ENCODE measurements at regions of chr1 and their contacts with region 1.

Region 1: GRCh38 chr1:112619520-112620376 is at the start of gene CAPZA1:
- DNase-seq: peak; percentile 90
- H3K4me3 ChIP-seq: peak within 1 kb of the TSS; percentile 85 to 91
- H3K27ac ChIP-seq: peak within 1 kb of the TSS; percentile 95 to 98
- H3K4me1 ChIP-seq: peaks cover 6% of the 10 kb centered on the region
- H3K27me3 ChIP-seq: no peaks in the 10 kb centered on the region
- CTCF ChIP-seq: peak in 1 of 4 experiments; percentile 4
- POLR2A ChIP-seq: peak; percentile 77
- total RNA-seq, gene CAPZA1: 87.4 to 104 TPM

Region 2: DNA sequence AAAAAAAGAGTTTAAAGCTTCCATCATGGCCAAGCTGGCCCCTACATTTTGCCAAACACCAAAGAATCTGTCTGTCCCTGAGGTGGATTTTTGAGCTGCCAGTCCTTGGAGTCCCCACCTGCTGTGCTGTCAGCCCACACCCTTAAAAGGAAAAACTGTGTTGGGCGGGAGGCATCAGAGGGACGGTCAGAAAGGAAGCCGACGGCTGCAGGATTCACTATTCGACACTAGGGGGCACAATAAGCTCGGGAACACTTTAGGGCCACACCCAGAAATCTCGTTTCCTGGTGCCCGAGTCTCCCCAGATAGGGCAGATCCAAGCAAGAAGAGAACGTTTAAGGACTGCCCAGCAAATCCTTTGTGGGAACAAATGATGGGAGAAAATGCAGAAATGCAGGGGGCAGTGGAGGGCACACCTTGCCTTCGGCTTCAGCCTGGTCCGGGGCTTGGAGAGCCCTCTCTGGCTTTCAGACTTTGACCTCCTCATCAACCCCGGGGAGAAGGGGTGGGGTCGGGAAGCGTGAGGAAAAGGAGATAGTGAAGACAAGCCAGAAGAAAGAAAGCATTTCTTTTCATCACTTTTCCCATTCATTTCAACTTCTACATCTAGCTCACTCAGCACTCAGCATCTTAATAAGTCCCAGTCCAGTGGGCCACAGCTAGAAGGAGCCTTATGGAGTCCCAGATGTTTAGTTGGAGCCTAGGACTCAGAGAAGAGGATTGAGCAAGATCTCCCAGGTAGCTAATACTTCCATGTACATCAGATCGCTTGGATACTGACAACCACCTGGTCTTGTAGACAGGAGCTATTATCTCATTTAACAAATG is 228.8 kb before region 1 on chr1:
- intact Hi-C with region 1: loop called (anchors 2 kb)
- DNase-seq: peak; percentile 89
- H3K4me3 ChIP-seq: peak overlapping the region; percentile 14 to 18
- H3K27ac ChIP-seq: peak overlapping the region; percentile 26 to 52
- H3K4me1 ChIP-seq: peaks cover 8% of the 10 kb centered on the region
- H3K27me3 ChIP-seq: no peaks in the 10 kb centered on the region
- CTCF ChIP-seq: peak; percentile 86 to 97 (median 96)
- POLR2A ChIP-seq: no peak

Region 3: DNA sequence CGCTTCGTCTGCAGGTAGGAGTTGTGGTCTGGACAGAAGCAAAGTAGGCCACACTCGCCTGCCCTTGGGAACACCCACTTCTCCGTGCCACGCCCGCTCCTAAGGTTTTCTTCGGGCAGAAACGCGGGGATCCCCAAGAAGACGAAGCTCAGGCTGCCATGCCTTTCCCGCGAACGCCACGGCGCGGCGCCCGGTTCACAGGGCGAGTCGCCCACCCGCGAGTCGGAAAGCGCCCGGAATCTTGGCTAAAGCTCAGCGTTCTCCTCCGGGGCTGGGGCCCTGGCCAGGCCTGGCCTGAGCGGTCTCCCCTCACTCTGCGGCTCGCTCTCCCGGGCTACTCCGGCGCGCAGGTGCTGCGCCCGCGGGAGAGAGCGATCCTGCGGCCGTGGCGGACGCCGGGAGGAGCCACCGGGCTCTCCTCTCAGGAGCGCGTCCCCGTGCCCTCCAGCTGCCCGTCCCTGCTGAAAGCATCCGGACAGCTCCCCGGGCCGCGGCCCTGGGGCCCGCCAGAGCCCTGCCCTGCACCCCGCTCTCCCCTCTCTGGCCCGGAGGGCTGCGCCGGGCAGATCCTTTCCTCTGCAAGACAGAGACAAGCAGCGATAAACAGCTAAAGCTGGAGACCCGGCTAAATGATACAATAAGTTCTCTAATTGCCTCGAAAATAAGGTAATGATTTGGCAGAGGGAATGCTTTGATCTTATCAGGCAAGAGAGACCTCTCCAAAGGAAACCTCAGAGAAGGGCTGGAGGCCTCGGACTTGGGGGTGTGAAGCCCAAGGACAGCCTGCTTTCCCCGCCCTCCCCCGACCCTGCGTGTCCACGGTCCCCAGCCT is 117.7 kb before region 1 on chr1:
- intact Hi-C with region 1: loop called (anchors 5 kb)
- DNase-seq: peak; percentile 70
- H3K4me3 ChIP-seq: peak overlapping the region; percentile 43 to 44
- H3K27ac ChIP-seq: peak overlapping the region; percentile 58 to 74
- H3K4me1 ChIP-seq: no peaks in the 10 kb centered on the region
- H3K27me3 ChIP-seq: no peaks in the 10 kb centered on the region
- CTCF ChIP-seq: peak; percentile 38 to 86 (median 70)
- POLR2A ChIP-seq: no peak

Region 4: DNA sequence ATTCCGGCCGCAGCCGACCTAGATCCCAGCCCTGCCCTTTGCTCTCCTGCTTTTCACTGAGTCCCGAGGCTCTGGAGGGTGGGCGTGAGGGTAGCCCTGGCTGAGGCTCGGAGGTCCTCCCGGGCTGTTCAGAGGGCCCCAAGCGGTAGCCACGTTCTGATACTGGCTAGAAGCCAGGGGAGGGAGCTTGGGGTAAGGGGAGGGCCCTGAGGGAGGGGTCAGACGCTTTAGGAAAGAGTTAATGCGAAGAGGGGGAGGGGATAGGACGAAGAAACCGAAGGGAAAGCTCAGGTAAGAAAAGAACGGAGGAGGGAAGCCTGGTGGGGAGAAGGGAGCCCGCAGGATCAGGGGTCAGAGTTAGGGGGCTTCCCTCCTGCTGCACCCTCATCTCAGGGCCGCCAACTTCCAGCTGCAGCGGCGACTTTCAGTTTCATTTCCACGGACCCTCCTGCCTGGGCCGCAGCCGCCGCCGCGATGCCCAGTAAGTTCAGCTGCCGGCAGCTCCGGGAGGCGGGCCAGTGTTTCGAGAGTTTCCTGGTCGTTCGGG is 54.8 kb after region 1 on chr1 and contains the start of gene MOV10:
- intact Hi-C with region 1: loop called (anchors 2 kb)
- DNase-seq: peak; percentile 58
- H3K4me3 ChIP-seq: peak within 1 kb of the TSS; percentile 66 to 75
- H3K27ac ChIP-seq: peak within 1 kb of the TSS; percentile 94
- H3K4me1 ChIP-seq: no peaks in the 10 kb centered on the region
- H3K27me3 ChIP-seq: no peaks in the 10 kb centered on the region
- CTCF ChIP-seq: no peak
- POLR2A ChIP-seq: no peak
- total RNA-seq, gene MOV10: 47.0 to 169 TPM

Region 5: DNA sequence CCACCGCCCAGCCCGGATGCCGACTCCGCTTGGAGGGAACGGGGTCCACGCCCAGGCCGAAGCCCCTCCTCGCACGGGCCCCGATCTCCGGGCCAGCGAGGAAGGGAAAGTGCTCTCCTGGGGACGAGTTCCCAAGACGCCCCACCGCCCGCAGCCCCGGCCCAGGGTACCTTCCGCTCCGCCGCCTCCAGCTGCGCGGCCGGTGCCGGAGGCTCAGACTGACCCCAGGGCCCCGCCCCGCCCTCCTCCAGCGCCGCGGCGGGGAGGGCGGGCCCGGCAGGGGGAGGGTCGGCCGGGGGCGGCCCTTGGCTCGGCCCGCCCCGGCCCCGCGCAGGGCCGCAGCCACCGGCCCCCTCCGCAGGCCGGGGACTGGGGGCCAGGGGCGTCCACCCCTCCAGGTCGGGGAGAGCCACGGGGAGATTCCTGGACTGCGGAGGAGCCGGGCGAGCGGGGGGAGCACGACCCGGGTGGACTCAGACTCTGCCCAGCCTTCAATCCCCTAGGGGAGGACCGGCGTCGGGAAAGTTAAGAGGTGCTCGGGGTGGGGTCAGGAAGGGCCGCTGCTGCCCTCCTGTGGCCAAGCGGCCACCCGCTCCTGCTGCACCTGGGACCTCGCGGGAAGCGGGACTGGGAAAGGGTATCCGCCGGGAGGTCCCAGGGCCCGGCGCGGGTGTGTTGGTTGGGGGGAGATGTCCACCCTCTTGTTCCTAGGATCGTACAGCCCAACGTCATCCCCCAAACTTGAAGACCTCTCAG is 87.3 kb after region 1 on chr1 and contains the start of gene RHOC:
- intact Hi-C with region 1: loop called (anchors 2 kb)
- DNase-seq: peak; percentile 90
- H3K4me3 ChIP-seq: peak within 1 kb of the TSS; percentile 96 to 99
- H3K27ac ChIP-seq: peak within 1 kb of the TSS; percentile 98
- H3K4me1 ChIP-seq: peaks cover 21% of the 10 kb centered on the region
- H3K27me3 ChIP-seq: no peaks in the 10 kb centered on the region
- CTCF ChIP-seq: peak; percentile 89 to 95 (median 92)
- POLR2A ChIP-seq: peak; percentile 91
- total RNA-seq, gene RHOC: 272 to 373 TPM

Measured in prostate gland (tissue), 2 donors.